H1 (cell line): ENCODE measurements at regions of chr13 and their contacts with region 1.

Region 1: GRCh38 chr13:41973247-41973741 is 12.4 kb upstream of the VWA8 start:
- DNase-seq: peak; percentile 25 to 76
- H3K4me3 ChIP-seq: no peak overlapping the region
- H3K27ac ChIP-seq: no peak overlapping the region; the same call in 1 of the 2 replicates
- H3K4me1 ChIP-seq: peaks cover 5 to 11% (median 10%) of the 10 kb centered on the region in 4 experiments
- H3K27me3 ChIP-seq: no peaks in the 10 kb centered on the region
- CTCF ChIP-seq: peak; percentile 19 to 54 (median 45)
- EP300 ChIP-seq: no peak
- POLR2A ChIP-seq: no peak
- RAD21 ChIP-seq: peak in 1 of 2 experiments; percentile 33; a peak in 2 of 4 replicates

Region 2: DNA sequence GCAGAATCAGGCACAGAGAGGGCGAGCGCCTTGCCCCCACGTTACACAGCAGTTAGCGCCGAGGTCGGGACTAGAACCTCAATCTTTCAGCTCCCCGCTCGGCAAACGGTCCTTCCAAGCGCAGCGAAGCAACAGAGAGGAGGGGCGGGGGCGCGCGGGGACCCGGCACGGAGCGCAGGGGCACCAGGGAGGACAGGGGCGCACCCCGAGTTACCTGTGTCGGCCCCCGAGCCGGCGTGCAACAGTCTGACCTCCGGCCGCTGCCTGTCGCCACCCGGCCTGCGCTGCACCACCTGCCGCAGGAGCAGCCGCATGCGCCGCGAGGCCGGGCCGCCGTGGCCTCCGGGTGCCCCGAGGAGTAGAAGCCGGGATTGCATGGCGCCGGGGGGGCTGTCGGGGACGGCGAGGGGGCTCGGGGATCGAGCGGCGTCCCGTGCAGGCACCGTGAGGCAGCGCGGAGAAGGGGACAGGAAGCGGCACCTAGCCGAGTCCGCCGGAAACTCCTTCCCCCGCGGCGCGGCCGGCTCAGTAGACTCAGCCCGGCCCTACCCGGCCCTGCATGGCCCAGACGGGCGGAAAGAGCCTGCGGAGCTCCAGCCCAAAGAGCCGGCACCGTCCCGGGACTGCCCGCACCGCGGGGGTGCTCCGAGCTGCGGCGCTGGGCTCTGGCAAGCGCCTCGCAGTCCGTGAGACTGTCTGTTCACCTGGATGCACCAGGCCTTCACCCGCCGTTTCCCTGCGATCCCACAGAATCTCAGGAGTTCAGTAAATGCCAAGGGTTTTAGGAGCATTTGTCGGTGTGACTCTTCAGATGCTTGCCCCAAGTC is 12.4 kb before region 1 on chr13 and contains the start of gene VWA8:
- CTCF ChIA-PET with region 1: interaction called, 31 read pairs
- POLR2A ChIA-PET with region 1: interaction called, 16 read pairs
- DNase-seq: peak; percentile 61 to 92
- H3K4me3 ChIP-seq: peak within 1 kb of the TSS; percentile 69 to 80 (median 72)
- H3K27ac ChIP-seq: peak within 1 kb of the TSS; percentile 64; the same call in 1 of the 2 replicates
- H3K4me1 ChIP-seq: peaks cover 0 to 3% (median 1%) of the 10 kb centered on the region in 4 experiments; a peak in 3 of 7 replicates
- H3K27me3 ChIP-seq: peaks cover 0 to 2% (median under 1%) of the 10 kb centered on the region in 4 experiments; a peak in 1 of 7 replicates
- CTCF ChIP-seq: no peak
- EP300 ChIP-seq: 0 out of 3 replicates have a peak, but pooled peaks of 1 of the 2 experiments have one; percentile 32
- POLR2A ChIP-seq: peak in 1 of 2 experiments; percentile 83; a peak in 2 of 3 replicates
- RAD21 ChIP-seq: no peak; a peak in 1 of 4 replicates
- total RNA-seq, gene VWA8: 17.9 and 19.6 TPM in 2 replicates